ENCODE measurements at regions of chr13 and their contacts with region 1.

Region 1: DNA sequence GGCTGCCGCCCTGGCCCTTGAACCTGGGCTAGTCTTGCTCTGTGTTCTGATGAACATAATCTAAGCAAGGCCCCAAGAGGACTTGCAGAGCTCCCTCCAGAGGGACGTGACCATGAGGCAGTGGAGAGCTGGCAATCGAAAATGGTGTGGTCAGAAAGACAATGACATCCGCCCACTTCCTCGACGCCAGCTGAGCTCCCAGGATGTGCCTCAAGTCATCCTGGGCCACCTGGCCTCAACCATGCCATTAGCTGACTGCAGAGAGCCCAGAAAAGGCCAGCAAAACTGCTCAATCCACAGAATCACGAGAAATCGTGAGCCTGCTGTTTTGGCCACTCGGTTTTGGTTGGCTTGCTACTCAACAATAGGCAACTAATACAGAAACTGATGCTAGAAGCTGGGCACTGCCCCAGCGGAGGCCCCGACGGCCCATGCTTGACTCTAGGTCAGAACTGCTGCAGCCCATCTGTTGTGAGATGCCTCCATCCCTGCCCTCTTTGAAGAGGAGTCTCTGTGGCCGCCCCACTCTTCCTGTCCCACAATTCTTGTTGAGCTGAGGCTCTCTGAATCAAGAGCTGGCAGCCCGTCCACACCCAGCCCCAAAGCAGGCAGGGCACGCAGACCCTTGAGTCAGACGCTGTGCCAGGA is 53.3 kb downstream of the STK24 start:
- DNase-seq: no peak
- ATAC-seq: no peak
- H3K4me3 ChIP-seq: no peak overlapping the region
- H3K4me3 Mint-ChIP-seq: peak overlapping the region; percentile 60
- H3K27ac ChIP-seq: peak overlapping the region; percentile 10 to 24
- H3K27ac Mint-ChIP-seq: peak overlapping the region; percentile 88
- H3K4me1 ChIP-seq: peaks cover 45 to 67% of the 10 kb centered on the region in 2 donors
- H3K4me1 Mint-ChIP-seq: peaks cover 98% of the 10 kb centered on the region
- H3K27me3 ChIP-seq: no peaks in the 10 kb centered on the region
- H3K27me3 Mint-ChIP-seq: no peaks in the 10 kb centered on the region
- CTCF ChIP-seq: no peak

Region 2: DNA sequence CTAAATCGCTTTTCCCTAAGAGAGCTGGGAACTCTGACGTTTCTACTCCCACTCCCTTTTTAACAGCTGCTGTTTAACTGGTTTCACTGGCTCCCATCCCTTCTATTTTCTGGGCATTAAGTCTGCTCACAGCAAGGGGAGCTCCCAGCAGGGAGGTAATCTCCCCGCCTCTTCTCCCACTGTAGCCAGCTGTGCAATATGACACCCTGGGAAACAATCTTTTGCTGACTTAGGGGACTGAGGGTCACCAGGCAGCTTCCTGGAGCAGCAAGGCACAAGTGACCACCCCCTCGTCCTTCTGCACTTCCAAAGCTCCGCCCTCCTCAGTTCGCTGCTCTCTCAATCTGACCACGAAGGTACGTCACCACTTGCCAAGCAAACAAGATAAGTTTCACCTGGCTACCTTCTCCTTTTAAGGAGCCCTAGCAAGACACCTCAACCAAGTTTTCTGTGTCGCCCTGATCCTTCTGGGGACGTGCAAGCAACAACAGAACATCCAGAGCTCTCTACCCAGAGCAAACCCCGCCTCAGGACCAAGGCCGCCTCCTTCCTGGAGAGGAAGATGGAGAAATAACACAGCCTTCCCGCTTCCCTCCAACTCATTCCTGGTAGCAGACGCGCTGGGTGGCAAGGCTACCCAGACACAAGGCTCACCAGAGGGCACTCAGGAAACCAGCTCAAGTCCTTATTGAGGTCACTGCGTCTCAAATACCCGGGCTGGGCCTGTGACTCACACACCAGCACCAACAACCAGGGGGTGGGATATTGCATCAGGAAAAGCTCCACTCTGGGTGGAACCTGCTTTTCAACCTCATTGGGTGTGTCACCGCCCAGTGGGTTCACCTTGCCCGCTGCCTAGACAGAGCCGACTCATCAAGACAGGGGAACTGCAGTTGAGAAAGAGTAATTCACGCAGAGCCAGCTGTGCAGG is 39.0 kb before region 1 on chr13:
- CTCF ChIA-PET with region 1: interaction called, 3 read pairs
- POLR2A ChIA-PET with region 1: no interaction called
- intact Hi-C with region 1: loop called (anchors 5 kb)
- DNase-seq: no peak
- ATAC-seq: no peak
- H3K4me3 ChIP-seq: no peak overlapping the region
- H3K4me3 Mint-ChIP-seq: no peak overlapping the region
- H3K27ac ChIP-seq: no peak overlapping the region
- H3K27ac Mint-ChIP-seq: peak overlapping the region; percentile 10
- H3K4me1 ChIP-seq: peaks cover 39 to 69% of the 10 kb centered on the region in 2 donors
- H3K4me1 Mint-ChIP-seq: peaks cover 80% of the 10 kb centered on the region
- H3K27me3 ChIP-seq: no peaks in the 10 kb centered on the region
- H3K27me3 Mint-ChIP-seq: no peaks in the 10 kb centered on the region
- CTCF ChIP-seq: no peak

Region 3: DNA sequence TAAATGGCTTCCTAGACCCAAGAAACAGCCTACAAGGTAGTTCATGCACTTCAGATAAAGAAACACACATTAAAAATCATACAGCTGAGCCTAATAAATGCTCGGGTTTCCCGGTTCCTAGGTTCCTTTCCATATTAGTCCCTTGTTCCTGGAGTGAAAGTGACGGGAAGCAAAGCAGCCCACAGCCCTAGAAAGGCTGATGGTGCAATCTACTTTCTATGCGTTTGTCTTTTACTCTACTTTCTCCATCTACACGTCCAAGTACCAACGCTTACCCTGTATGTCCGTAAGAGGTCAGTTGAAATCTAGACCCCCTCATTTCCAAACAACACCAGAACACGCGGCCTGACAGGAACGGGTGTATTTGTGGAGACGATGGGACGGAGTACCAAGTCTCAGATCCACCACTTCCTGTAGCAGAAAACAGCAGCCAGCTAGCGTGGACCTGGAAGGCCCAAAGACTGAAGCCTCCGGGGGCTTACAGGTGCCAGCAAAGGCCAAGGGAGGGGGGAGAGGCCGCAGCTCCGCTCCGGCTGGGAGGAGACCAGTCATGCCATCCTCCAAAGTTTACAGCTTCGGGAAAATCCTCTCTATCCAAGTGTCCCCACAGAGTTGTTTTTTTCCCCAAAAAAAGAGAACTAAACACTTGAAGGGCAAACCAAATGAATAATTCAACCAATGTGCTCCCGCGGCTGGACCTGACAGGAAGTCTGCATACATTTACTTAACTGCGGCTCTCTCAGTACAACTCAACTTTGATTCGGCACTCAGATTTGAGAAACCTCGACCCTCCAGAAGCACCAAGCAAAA is 19.2 kb after region 1 on chr13:
- CTCF ChIA-PET with region 1: no interaction called
- POLR2A ChIA-PET with region 1: no interaction called
- intact Hi-C with region 1: loop called (anchors 2 kb)
- DNase-seq: peak; percentile 46
- ATAC-seq: peak; percentile 50
- H3K4me3 ChIP-seq: peak overlapping the region; percentile 1 to 58 (median 27)
- H3K4me3 Mint-ChIP-seq: peak overlapping the region; percentile 81
- H3K27ac ChIP-seq: peak overlapping the region; percentile 25 to 55
- H3K27ac Mint-ChIP-seq: peak overlapping the region; percentile 73
- H3K4me1 ChIP-seq: peaks cover 42 to 44% of the 10 kb centered on the region in 2 donors
- H3K4me1 Mint-ChIP-seq: peaks cover 87% of the 10 kb centered on the region
- H3K27me3 ChIP-seq: no peaks in the 10 kb centered on the region
- H3K27me3 Mint-ChIP-seq: no peaks in the 10 kb centered on the region
- CTCF ChIP-seq: no peak

Region 4: DNA sequence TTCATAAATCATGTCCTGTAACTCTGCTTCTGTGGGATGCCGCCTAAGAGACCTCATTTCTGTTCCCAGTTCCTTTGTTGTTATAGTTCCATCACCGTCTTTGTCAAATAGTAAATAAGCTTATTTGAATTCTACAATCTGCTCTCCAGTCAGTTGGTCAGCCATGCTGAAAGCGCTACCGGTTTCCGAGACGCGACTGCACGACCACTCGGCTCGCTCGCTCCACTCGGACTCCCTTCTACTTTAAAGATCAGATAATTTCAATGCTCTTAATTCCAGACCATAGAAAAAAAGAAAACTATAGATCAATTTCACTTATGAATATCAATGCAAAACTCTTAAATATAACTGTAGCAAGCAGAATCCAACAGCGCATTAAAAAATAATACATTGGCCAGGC is 117.5 kb after region 1 on chr13:
- CTCF ChIA-PET with region 1: no interaction called
- POLR2A ChIA-PET with region 1: no interaction called
- intact Hi-C with region 1: no loop called
- DNase-seq: no peak
- ATAC-seq: no peak
- H3K4me3 ChIP-seq: no peak overlapping the region
- H3K4me3 Mint-ChIP-seq: no peak overlapping the region
- H3K27ac ChIP-seq: no peak overlapping the region
- H3K27ac Mint-ChIP-seq: no peak overlapping the region
- H3K4me1 ChIP-seq: no peaks in the 10 kb centered on the region
- H3K4me1 Mint-ChIP-seq: no peaks in the 10 kb centered on the region
- H3K27me3 ChIP-seq: no peaks in the 10 kb centered on the region
- H3K27me3 Mint-ChIP-seq: peaks cover 28% of the 10 kb centered on the region
- CTCF ChIP-seq: no peak